ENCODE measurements at regions of chr7 and their contacts with region 1.

Region 1: DNA sequence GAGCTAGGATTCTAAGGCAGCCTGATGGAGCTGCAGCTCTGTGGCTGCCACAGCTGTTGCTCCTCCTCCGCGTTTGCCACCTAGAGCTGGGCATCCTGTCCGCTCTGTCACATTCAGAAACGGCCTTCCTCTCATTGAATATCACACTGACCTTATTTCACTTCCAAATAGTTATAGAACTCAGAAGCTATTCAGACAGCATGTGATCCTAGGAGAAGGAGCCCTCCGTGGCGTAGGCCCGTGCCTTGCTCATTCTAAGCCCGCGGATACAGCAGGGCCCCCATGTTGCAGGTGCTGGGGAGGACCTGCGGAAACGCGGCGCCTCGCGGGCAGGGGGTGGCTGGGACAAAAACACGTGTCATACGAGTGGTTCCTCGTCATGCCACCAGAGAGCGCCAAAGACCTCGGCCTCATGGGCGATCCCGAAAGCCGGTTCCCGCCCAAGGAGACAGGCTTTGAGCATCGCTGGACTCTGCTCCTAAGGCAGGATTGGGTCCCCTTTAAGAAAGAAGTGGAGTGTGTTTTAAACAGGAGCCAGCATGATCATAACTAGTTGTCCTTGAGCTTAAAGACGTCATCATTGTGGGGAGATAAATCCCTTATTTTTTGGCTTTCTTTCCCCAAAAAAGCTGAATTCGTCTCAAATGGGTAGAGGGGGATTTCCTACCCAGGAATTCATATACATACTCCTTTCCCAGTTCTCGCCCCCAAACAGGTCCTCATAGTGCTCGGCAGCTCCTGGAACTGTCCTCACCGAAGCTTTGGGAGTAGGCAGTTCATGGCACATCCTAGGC is 17.9 kb upstream of the FIGNL1 start:
- DNase-seq: peak; percentile 50
- ATAC-seq: peak; percentile 90
- H3K4me3 ChIP-seq: no peak overlapping the region
- H3K27ac ChIP-seq: no peak overlapping the region
- H3K4me1 ChIP-seq: peaks cover 8% of the 10 kb centered on the region
- H3K27me3 ChIP-seq: no peaks in the 10 kb centered on the region
- CTCF ChIP-seq: peak; percentile 97
- EP300 ChIP-seq: no peak
- POLR2A ChIP-seq: no peak
- RAD21 ChIP-seq: peak; percentile 96

Region 2: GRCh38 chr7:50092579-50093491 is 375.2 kb before region 1 on chr7 and contains the start of gene ZPBP:
- CTCF ChIA-PET with region 1: no interaction called
- POLR2A ChIA-PET with region 1: no interaction called
- in situ Hi-C with region 1: no loop called
- intact Hi-C with region 1: loop called (anchors 1 kb)
- DNase-seq: peak; percentile 18
- ATAC-seq: peak; percentile 50
- H3K4me3 ChIP-seq: no peak within 1 kb of the TSS
- H3K27ac ChIP-seq: no peak within 1 kb of the TSS
- H3K4me1 ChIP-seq: no peaks in the 10 kb centered on the region
- H3K27me3 ChIP-seq: no peaks in the 10 kb centered on the region
- CTCF ChIP-seq: peak; percentile 72
- EP300 ChIP-seq: no peak
- POLR2A ChIP-seq: no peak
- RAD21 ChIP-seq: peak; percentile 22; the same call in 1 of the 2 replicates
- total RNA-seq, gene ZPBP: not detected in 2 replicates

Region 3: GRCh38 chr7:50528266-50529092 is 60.5 kb after region 1 on chr7:
- CTCF ChIA-PET with region 1: no interaction called
- POLR2A ChIA-PET with region 1: no interaction called
- in situ Hi-C with region 1: no loop called
- intact Hi-C with region 1: no loop called
- DNase-seq: peak; percentile 83
- ATAC-seq: peak; percentile 98
- H3K4me3 ChIP-seq: peak overlapping the region in 2 of 3 experiments; percentile 12 to 49; a peak in 2 of 6 replicates
- H3K27ac ChIP-seq: peak overlapping the region; percentile 72
- H3K4me1 ChIP-seq: peaks cover 36% of the 10 kb centered on the region
- H3K27me3 ChIP-seq: no peaks in the 10 kb centered on the region
- CTCF ChIP-seq: no peak
- EP300 ChIP-seq: 0 out of 4 replicates have a peak, but pooled peaks of 1 of the 2 experiments have one; percentile 10
- POLR2A ChIP-seq: no peak
- RAD21 ChIP-seq: no peak

Region 4: GRCh38 chr7:50962962-50963374 is 495.0 kb after region 1 on chr7:
- CTCF ChIA-PET with region 1: no interaction called
- POLR2A ChIA-PET with region 1: no interaction called
- in situ Hi-C with region 1: no loop called
- intact Hi-C with region 1: no loop called
- DNase-seq: peak; percentile 41
- ATAC-seq: peak; percentile 97
- H3K4me3 ChIP-seq: no peak overlapping the region
- H3K27ac ChIP-seq: no peak overlapping the region
- H3K4me1 ChIP-seq: peaks cover 16% of the 10 kb centered on the region
- H3K27me3 ChIP-seq: no peaks in the 10 kb centered on the region
- CTCF ChIP-seq: no peak
- EP300 ChIP-seq: no peak
- POLR2A ChIP-seq: no peak
- RAD21 ChIP-seq: no peak

Region 5: GRCh38 chr7:51141451-51142003 is 673.5 kb after region 1 on chr7:
- CTCF ChIA-PET with region 1: no interaction called
- POLR2A ChIA-PET with region 1: no interaction called
- in situ Hi-C with region 1: loop called (anchors 25 kb)
- intact Hi-C with region 1: no loop called
- DNase-seq: no peak
- ATAC-seq: no peak
- H3K4me3 ChIP-seq: no peak overlapping the region
- H3K27ac ChIP-seq: no peak overlapping the region
- H3K4me1 ChIP-seq: no peaks in the 10 kb centered on the region
- H3K27me3 ChIP-seq: no peaks in the 10 kb centered on the region
- CTCF ChIP-seq: peak; percentile 39
- EP300 ChIP-seq: no peak
- POLR2A ChIP-seq: no peak
- RAD21 ChIP-seq: no peak